ENCODE measurements at regions of chr17 and their contacts with region 1.

Region 1: GRCh38 chr17:82767041-82767754 is 15.3 kb downstream of the TBCD start:
- DNase-seq: peak in 2 of 6 donors; percentile 30 to 62
- ATAC-seq: peak in 3 of 4 donors; percentile 66 to 83 (median 66)
- H3K4me3 ChIP-seq: no peak overlapping the region
- H3K27ac ChIP-seq: no peak overlapping the region
- H3K4me1 ChIP-seq: no peaks in the 10 kb centered on the region
- H3K27me3 ChIP-seq: no peaks in the 10 kb centered on the region
- CTCF ChIP-seq: peak in 3 of 4 donors; percentile 31 to 41 (median 32)

Region 2: GRCh38 chr17:82668631-82669099 is 98.5 kb before region 1 on chr17:
- intact Hi-C with region 1: loop called in 1 of 3 experiments (anchors 5 kb)
- DNase-seq: peak; percentile 62 to 88 (median 74)
- ATAC-seq: peak; percentile 94 to 99 (median 97)
- H3K4me3 ChIP-seq: peak overlapping the region in 1 of 4 donors; percentile 22
- H3K27ac ChIP-seq: no peak overlapping the region
- H3K4me1 ChIP-seq: no peaks in the 10 kb centered on the region
- H3K27me3 ChIP-seq: no peaks in the 10 kb centered on the region
- CTCF ChIP-seq: peak; percentile 45 to 67 (median 51)

Region 3: DNA sequence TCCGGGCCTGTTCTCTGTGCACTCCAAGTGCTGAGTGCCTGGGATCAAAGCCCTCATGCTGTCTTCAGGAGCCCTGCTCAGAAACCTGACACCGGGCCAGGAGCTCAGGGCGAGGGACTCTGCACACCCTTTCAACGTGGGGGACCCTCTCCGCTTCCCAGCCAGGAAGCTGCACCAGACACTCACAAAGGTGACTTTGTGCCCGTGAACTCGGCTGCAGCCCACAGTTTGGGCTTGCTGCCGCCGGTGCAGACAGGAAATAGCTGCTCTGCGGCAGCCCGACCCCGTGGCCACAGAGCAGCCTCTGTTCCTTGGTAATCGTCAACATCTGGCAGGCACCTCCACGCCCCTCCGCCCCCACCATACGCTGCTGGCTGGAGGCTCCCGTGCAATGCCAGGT is 218.8 kb after region 1 on chr17:
- intact Hi-C with region 1: no loop called
- DNase-seq: peak in 2 of 6 donors; percentile 25 to 30
- ATAC-seq: peak; percentile 61 to 83 (median 80)
- H3K4me3 ChIP-seq: no peak overlapping the region
- H3K27ac ChIP-seq: peak overlapping the region in 2 of 4 donors; percentile 36 to 52
- H3K4me1 ChIP-seq: no peaks in the 10 kb centered on the region
- H3K27me3 ChIP-seq: no peaks in the 10 kb centered on the region
- CTCF ChIP-seq: no peak